Posterior vena cava (tissue), 2 donors: ENCODE measurements at regions of chr2 and their contacts with region 1.

Region 1: DNA sequence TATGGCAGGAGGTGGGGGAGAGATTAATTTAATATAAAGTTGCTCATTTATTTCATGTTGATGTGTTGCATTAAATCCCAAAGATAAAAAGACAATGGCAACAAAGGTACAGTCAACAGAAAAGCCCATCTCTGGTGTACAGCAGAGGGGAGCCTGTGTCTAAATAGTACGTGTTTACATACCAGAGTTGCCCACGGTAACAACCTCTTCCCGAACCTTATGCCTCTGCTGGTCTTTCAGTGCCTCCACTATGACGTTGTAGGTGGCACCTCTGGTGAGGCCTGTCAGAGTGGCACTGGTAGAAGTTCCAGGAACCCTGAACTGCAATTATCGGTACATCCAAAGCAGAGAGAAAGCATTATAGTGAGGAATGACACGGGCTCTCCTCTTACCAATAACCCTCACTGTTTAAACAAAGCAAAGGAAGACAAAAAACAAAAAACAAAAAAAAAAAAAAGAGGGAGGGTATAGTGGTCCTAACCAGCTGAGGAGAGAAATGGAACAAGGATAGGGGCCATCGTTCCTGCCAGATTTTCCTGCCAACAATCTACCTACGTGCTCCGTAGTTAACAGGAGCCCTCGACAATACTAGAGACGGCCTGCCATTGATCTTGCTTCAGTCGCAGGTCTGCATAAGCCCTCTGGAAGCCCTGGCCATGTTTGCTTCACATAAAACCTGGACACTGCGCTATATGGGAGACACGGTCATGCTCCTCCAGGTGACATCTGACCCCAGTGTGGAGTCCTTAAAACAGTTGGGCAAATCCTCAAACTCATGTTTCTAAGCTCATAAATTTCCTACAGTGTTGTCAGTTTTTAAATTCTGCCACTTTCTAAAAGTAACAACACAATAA is 58.5 kb downstream of the ATIC start:
- DNase-seq: no peak

Region 2: DNA sequence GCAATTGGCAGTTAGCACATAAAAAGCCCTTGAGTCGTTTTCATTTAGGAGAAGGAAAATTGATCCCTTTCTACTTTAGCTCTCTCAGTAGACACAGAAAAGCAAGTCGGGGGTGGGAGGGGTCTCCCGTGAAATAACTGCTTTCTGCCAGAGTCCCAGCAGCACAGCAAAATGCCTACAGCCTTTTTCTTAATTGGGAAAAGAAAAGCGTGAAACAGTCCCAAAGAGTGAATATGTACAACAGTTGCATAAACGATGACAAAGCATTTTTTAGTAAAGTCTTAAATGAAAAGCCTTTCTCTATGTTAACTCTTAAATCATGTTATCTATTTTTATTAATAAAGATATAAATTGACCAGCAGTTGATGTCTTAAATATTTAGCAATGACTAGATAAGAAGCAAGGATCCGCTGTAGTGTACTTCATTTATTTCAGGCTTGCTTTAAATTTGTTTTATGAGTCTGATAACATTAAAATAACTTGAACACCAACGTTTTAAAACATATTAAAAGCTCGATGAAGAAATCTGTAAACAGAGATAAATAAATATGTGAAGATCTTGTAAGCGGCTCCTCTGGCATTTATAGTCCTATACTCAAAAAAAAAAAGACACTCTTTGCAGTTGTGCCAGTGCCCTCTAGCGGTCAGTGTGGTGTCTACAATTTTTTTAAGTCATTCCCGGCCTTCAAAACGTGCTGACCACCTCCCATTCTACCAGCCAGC is 100.8 kb before region 1 on chr2:
- intact Hi-C with region 1: no loop called
- DNase-seq: no peak

Region 3: DNA sequence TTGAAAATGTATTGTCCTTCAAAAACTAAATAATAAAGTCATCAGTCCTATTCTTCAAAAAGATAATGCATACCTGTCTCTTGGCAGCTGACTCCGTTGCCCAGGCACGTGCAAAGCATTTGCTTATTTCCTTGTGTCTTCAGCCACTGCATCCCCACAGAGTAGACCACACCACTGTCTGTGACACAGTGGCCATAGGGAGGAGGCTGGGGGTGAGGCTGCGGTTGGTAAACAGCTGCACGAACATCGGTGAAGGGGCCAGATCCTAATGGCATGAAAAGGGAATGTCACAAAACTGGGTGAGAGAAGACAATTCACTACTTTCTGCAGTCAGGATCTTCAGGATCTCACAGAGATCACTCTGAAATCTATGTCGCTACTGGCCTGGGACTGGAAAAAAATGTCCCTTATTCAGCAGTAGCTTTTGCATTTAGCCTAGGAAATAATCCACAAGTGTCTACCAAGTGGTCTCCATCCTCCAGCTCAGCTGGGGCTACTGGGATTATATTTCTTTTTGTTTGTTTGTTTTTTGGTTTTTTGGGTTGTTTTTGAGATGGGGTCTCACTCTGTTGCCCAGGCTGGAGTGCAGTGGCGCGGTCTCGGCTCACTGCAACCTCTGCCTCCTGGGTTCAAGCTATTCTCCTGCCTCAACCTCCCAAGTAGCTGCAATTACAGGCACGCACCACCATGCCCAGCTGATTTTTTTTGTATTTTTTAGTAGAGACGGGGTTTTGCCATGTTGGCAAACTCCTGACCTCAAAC is 54.9 kb after region 1 on chr2:
- intact Hi-C with region 1: loop called in 1 of 2 experiments (anchors 10 kb)
- DNase-seq: no peak